PC-9 (cell line): ENCODE measurements at regions of chr17 and their contacts with region 1.

Region 1: DNA sequence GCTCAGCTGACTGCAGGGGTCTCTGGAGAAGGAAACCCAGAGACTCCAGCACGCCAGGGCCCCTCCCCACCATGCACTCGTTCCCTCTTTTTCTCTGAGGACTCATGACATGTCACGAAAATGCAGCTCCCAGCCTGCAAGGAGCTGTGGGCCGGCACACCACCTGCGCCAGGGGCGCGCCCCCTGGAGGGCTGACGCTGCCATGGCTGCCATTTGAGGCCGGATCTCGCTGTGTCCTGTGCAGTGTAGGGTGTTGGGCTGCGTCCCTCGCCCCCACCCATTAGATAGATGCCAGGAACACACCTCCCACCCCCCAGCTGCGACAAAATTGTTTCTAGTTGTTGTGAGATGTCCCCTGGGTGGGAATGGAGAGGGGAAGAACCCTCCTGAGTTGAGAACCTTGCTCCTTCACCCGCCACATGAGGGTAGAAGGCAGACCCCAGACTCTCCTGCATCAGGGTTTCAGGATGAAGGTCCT is 8.2 kb downstream of the SYNGR2 start:
- DNase-seq: no peak
- H3K4me3 ChIP-seq: no peak overlapping the region
- H3K27ac ChIP-seq: no peak overlapping the region
- H3K4me1 ChIP-seq: 0 out of 2 replicates have a peak, but pooled peaks cover 4% of the 10 kb centered on the region
- H3K27me3 ChIP-seq: no peaks in the 10 kb centered on the region
- CTCF ChIP-seq: peak; percentile 50

Region 2: DNA sequence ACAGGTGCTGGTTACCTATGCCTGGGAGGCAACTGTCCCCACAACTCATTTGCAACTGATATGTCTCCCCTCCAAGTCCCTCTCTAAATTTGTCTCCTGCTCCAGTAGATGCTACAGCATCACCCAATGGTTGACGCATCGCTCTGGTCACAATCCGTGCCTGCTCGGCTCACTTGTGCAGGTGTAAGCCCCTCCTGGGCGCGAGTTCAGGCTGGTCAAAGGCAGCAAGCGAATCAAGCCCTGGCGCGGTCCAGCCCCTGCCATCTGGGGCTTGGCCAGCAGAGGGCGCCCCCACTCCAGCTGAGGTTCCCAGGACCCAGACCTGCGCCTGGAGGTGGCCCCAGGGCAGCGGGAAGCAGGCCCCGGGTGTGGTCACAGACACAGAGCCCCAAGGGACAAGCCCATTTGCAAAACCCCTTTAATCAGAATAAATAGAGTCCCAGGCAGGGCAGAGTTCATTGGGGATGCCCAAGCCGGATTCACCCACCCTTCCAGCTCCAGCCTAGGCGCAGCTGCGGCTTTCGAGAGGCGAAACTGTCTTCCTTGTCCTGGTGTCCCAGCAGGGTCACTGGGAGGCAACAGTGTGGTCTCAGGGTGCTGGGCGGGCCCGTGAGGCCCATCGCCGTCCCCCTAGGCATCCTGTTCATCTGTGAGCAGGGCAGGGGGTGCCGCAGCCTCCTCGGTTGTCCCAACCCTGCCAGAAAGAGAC is 63.9 kb before region 1 on chr17:
- CTCF ChIA-PET with region 1: no interaction called
- POLR2A ChIA-PET with region 1: no interaction called
- intact Hi-C with region 1: loop called (anchors 2 kb)
- DNase-seq: peak in 1 of 2 experiments; percentile 84
- H3K4me3 ChIP-seq: no peak overlapping the region
- H3K27ac ChIP-seq: no peak overlapping the region
- H3K4me1 ChIP-seq: no peaks in the 10 kb centered on the region
- H3K27me3 ChIP-seq: no peaks in the 10 kb centered on the region
- CTCF ChIP-seq: peak; percentile 92

Region 3: GRCh38 chr17:78128551-78129350 is 47.8 kb before region 1 on chr17 and contains the start of gene TMC6:
- CTCF ChIA-PET with region 1: interaction called, 3 read pairs
- POLR2A ChIA-PET with region 1: interaction called, 12 read pairs
- intact Hi-C with region 1: loop called (anchors 1 kb)
- DNase-seq: peak; percentile 83 to 92
- H3K4me3 ChIP-seq: peak within 1 kb of the TSS; percentile 81
- H3K27ac ChIP-seq: peak within 1 kb of the TSS; percentile 69
- H3K4me1 ChIP-seq: peaks cover 19% of the 10 kb centered on the region
- H3K27me3 ChIP-seq: no peaks in the 10 kb centered on the region
- CTCF ChIP-seq: no peak
- total RNA-seq, gene TMC6: 97.7 and 116 TPM in 2 replicates

Region 4: GRCh38 chr17:78237401-78238012 is 60.9 kb after region 1 on chr17:
- CTCF ChIA-PET with region 1: no interaction called
- POLR2A ChIA-PET with region 1: no interaction called
- intact Hi-C with region 1: no loop called
- DNase-seq: no peak
- H3K4me3 ChIP-seq: no peak overlapping the region
- H3K27ac ChIP-seq: no peak overlapping the region
- H3K4me1 ChIP-seq: no peaks in the 10 kb centered on the region
- H3K27me3 ChIP-seq: no peaks in the 10 kb centered on the region
- CTCF ChIP-seq: no peak